PC-9 (cell line): ENCODE measurements at regions of chr12 and their contacts with region 1.

Region 1: GRCh38 chr12:80490344-80490743 is 46.3 kb downstream of the PTPRQ start:
- DNase-seq: no peak
- H3K4me3 ChIP-seq: no peak overlapping the region
- H3K27ac ChIP-seq: no peak overlapping the region
- H3K4me1 ChIP-seq: no peaks in the 10 kb centered on the region
- H3K27me3 ChIP-seq: no peaks in the 10 kb centered on the region
- CTCF ChIP-seq: no peak

Region 2: DNA sequence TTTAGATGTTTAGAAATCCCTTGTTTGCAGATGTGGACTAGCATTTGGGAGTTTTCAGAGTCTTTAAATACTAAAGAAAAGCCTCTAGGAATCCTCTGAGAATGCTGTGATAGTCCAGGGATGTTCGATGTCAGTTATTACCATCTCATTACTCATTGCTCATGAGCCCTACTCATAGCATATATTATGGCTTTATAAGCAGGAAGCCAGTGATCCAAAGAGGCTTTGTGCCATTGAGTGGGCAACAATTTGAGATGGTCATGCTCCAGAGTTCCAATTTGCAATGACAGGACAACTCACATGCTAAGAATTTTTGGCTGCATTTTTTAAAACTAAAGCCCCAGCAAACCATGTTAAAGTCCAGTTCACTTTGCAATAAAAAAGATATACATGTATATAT is 228.0 kb before region 1 on chr12:
- CTCF ChIA-PET with region 1: no interaction called
- POLR2A ChIA-PET with region 1: no interaction called
- intact Hi-C with region 1: no loop called
- DNase-seq: no peak
- H3K4me3 ChIP-seq: no peak overlapping the region
- H3K27ac ChIP-seq: no peak overlapping the region
- H3K4me1 ChIP-seq: no peaks in the 10 kb centered on the region
- H3K27me3 ChIP-seq: no peaks in the 10 kb centered on the region
- CTCF ChIP-seq: no peak

Region 3: GRCh38 chr12:80648881-80649280 is 158.5 kb after region 1 on chr12:
- CTCF ChIA-PET with region 1: no interaction called
- POLR2A ChIA-PET with region 1: no interaction called
- intact Hi-C with region 1: loop called (anchors 10 kb)
- DNase-seq: no peak
- H3K4me3 ChIP-seq: no peak overlapping the region
- H3K27ac ChIP-seq: no peak overlapping the region
- H3K4me1 ChIP-seq: no peaks in the 10 kb centered on the region
- H3K27me3 ChIP-seq: no peaks in the 10 kb centered on the region
- CTCF ChIP-seq: no peak